Activated CD4-positive, alpha-beta T cell treated with anti-CD3 and anti-CD28 coated beads for 36 hours (primary cell): ENCODE measurements at regions of chr1 and their contacts with region 1.

Region 1: GRCh38 chr1:198681831-198682759 is 43.3 kb downstream of the PTPRC start:
- DNase-seq: peak; percentile 89
- ATAC-seq: peak; percentile 76
- H3K4me3 Mint-ChIP-seq: peak overlapping the region; percentile 61
- H3K27ac Mint-ChIP-seq: peak overlapping the region; percentile 96
- H3K4me1 Mint-ChIP-seq: peaks cover 85% of the 10 kb centered on the region
- H3K27me3 Mint-ChIP-seq: no peaks in the 10 kb centered on the region

Region 2: DNA sequence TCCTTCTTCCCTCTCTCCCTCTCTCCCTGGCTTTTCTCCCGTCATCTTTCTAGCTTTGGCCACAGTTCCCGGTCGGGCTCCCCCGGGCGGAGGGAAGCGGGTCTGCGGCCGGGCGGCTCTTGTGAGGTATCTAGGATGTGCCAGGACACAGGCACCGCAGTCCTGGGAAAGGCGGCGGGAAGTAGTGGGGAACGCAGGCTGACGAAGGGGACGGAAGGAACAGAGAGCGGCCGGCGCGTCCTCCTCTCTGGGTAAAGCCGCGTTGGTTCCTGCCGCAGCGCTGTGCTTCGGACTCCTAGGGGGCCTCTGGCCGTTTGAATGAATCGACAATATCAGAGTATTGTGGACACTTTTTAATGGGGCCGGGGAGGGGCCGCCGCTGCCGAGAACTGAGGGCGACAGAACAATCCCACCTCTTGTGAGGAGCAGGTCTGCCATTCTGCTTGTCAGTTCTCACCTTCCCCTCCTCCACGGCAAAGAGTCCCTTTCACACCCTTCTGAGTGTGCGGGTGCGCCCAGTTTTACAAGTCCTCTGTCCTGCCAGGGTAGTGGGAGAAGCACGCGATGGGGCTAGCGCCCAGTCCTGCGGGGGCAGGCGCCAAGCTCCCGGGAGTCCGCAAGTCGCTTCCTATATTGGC is 766.1 kb before region 1 on chr1:
- CTCF ChIA-PET with region 1: no interaction called
- POLR2A ChIA-PET with region 1: no interaction called
- intact Hi-C with region 1: loop called in 1 of 2 experiments (anchors 10 kb)
- DNase-seq: peak; percentile 29
- ATAC-seq: no peak
- H3K4me3 Mint-ChIP-seq: peak overlapping the region; percentile 67
- H3K27ac Mint-ChIP-seq: no peak overlapping the region
- H3K4me1 Mint-ChIP-seq: peaks cover 72% of the 10 kb centered on the region
- H3K27me3 Mint-ChIP-seq: peaks cover 96% of the 10 kb centered on the region

Region 3: DNA sequence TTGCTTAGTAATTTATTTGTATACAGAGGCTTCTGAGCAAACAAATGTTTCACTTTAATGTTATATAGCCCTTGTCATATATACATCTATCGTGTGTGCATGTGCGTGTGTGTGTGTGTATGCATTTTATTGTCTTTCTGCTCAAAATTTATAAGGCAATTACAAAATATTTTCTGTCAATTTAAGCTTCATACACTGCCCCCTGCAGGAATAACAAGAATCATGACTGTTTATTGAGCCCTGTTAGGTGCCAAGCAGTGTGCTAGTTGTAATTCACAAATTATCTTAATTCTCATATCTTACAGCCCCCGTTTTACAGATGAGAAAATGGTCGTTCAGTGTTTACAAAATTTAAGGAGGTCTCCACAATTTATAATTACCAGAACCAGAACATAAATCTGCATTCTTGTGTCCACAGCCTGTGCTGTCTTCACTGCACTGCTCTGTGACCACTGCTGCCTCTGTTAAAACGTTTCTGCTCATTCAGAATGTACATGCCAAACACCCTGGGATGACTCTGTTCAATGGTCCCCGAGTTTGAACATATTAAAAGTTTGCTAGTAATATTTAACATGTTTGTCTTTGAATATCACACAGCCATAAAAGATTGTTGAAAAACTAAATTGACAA is 323.0 kb before region 1 on chr1:
- CTCF ChIA-PET with region 1: interaction called, 4 read pairs
- POLR2A ChIA-PET with region 1: no interaction called
- intact Hi-C with region 1: loop called in 1 of 2 experiments (anchors 5 kb)
- DNase-seq: no peak
- ATAC-seq: no peak
- H3K4me3 Mint-ChIP-seq: no peak overlapping the region
- H3K27ac Mint-ChIP-seq: no peak overlapping the region
- H3K4me1 Mint-ChIP-seq: peaks cover 5% of the 10 kb centered on the region
- H3K27me3 Mint-ChIP-seq: no peaks in the 10 kb centered on the region

Region 4: DNA sequence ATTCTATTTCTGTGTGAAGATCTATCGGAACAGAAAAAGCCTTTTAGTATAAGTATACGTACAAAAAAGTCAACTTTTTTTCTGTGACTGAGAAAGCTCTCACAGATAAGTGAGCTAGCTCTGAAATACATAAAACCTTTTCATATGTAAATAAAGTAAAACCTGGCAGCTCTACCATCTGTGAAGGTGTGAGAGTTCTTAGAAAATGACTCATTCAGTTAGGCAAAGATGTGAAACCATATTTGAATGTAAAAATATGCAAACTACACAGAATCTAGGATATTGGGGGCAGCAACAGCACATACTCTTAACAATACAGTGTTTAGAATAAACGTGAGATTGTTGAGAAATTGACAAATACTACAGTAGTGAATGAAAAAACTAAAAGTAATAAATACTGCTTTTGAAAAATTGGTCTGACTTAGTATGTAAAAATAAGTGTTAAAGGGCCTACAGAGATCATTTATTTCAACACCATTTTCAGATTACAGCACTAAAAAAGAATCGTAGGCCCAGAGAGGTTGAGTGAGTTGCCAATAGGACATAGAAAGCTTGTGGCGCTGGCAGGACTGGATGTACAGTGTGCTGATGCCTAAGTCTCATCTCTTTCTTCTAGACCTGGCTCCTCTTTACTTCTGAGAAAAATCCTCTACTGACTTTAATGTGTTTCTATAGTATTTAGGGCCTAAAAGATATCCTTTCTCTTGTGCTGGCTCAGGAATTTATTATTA is 161.4 kb before region 1 on chr1:
- CTCF ChIA-PET with region 1: interaction called, 12 read pairs
- POLR2A ChIA-PET with region 1: interaction called, 11 read pairs
- intact Hi-C with region 1: loop called (anchors 1 kb)
- DNase-seq: peak; percentile 23
- ATAC-seq: peak; percentile 60
- H3K4me3 Mint-ChIP-seq: peak overlapping the region; percentile 64
- H3K27ac Mint-ChIP-seq: peak overlapping the region; percentile 90
- H3K4me1 Mint-ChIP-seq: peaks cover 76% of the 10 kb centered on the region
- H3K27me3 Mint-ChIP-seq: no peaks in the 10 kb centered on the region

Region 5: DNA sequence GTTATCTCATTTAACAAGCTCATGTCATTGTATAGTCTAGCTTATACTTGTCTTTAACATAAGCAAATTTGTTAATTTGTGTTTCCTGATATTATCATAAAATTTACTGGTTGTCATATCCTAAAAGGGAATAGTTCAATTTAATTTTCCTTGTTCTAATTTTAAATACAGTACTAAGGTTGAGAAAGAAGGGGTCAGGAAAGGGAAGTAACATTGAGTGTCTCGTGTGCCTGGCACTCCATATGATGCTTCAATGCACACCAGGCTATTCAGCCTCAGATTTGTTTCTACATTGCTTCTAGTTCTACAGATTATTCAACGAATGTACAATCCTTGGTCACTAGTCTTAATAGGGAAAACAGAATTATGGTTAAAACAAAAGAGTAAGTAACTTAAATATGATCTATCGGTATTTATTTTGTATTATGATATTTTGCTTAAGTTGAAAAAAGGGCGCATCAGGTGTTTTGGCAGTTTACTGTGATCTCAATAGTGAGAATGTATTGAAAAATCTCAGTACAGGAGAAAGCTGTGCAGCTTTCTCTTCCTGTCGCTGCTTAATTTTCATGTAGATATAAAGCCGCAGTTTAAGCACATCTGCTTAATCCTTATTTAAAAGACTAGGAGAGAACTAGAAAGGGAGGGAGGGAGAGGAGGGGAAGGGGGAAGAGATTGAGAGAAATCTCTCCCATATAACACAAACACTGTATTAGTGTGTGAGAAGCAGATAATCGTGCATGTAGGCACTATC is 30.3 kb before region 1 on chr1:
- CTCF ChIA-PET with region 1: interaction called, 17 read pairs
- POLR2A ChIA-PET with region 1: interaction called, 16 read pairs
- intact Hi-C with region 1: loop called (anchors 1 kb)
- DNase-seq: no peak
- ATAC-seq: no peak
- H3K4me3 Mint-ChIP-seq: peak overlapping the region; percentile 72
- H3K27ac Mint-ChIP-seq: peak overlapping the region; percentile 97
- H3K4me1 Mint-ChIP-seq: peaks cover 73% of the 10 kb centered on the region
- H3K27me3 Mint-ChIP-seq: no peaks in the 10 kb centered on the region